Ascending aorta (tissue), 2 donors: ENCODE measurements at regions of chr2 and their contacts with region 1.

Region 1: GRCh38 chr2:234823877-234824376 is 127.9 kb upstream of the SH3BP4 start:
- DNase-seq: peak; percentile 18 to 78
- H3K4me3 ChIP-seq: no peak overlapping the region
- H3K27ac ChIP-seq: peak overlapping the region; percentile 75 to 76
- H3K4me1 ChIP-seq: peaks cover 8 to 15% of the 10 kb centered on the region in 2 donors
- H3K27me3 ChIP-seq: no peaks in the 10 kb centered on the region
- CTCF ChIP-seq: no peak

Region 2: DNA sequence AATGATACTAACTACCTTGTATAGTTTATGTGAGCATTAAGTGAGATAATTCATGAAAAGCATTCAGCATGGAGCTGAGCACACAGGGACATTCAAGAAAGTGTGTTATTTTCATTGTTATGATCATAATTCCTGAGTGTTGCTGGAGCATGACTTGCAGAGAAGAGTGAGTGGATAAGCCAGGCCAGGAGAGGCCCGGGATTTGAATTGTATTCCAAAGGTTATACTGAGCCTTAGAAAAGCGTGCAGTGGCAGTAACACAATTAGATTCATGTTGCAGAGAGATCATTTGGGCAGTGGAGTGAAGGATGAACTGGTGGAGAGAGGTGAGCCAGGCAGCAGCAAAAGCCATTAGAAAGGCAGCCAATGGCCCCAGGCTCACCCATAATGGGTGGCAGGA is 15.0 kb before region 1 on chr2:
- intact Hi-C with region 1: no loop called
- DNase-seq: no peak
- H3K4me3 ChIP-seq: no peak overlapping the region
- H3K27ac ChIP-seq: no peak overlapping the region
- H3K4me1 ChIP-seq: no peaks in the 10 kb centered on the region
- H3K27me3 ChIP-seq: no peaks in the 10 kb centered on the region
- CTCF ChIP-seq: no peak

Region 3: GRCh38 chr2:234951664-234952269 is 127.8 kb after region 1 on chr2 and contains the start of gene SH3BP4:
- intact Hi-C with region 1: loop called (anchors 5 kb)
- DNase-seq: peak; percentile 26 to 89
- H3K4me3 ChIP-seq: peak within 1 kb of the TSS; percentile 86 to 96
- H3K27ac ChIP-seq: peak within 1 kb of the TSS; percentile 80 to 82
- H3K4me1 ChIP-seq: peaks cover 3 to 8% of the 10 kb centered on the region in 2 donors
- H3K27me3 ChIP-seq: no peaks in the 10 kb centered on the region
- CTCF ChIP-seq: no peak
- total RNA-seq, gene SH3BP4: 36.7 TPM

Region 4: GRCh38 chr2:234989183-234989701 is 165.3 kb after region 1 on chr2:
- intact Hi-C with region 1: loop called (anchors 5 kb)
- DNase-seq: peak; percentile 75 to 98
- H3K4me3 ChIP-seq: peak overlapping the region in 1 of 2 donors; percentile 1
- H3K27ac ChIP-seq: peak overlapping the region; percentile 64 to 80
- H3K4me1 ChIP-seq: peaks cover 6 to 34% of the 10 kb centered on the region in 2 donors
- H3K27me3 ChIP-seq: no peaks in the 10 kb centered on the region
- CTCF ChIP-seq: no peak